ENCODE measurements at regions of chr2 and their contacts with region 1.

Region 1: DNA sequence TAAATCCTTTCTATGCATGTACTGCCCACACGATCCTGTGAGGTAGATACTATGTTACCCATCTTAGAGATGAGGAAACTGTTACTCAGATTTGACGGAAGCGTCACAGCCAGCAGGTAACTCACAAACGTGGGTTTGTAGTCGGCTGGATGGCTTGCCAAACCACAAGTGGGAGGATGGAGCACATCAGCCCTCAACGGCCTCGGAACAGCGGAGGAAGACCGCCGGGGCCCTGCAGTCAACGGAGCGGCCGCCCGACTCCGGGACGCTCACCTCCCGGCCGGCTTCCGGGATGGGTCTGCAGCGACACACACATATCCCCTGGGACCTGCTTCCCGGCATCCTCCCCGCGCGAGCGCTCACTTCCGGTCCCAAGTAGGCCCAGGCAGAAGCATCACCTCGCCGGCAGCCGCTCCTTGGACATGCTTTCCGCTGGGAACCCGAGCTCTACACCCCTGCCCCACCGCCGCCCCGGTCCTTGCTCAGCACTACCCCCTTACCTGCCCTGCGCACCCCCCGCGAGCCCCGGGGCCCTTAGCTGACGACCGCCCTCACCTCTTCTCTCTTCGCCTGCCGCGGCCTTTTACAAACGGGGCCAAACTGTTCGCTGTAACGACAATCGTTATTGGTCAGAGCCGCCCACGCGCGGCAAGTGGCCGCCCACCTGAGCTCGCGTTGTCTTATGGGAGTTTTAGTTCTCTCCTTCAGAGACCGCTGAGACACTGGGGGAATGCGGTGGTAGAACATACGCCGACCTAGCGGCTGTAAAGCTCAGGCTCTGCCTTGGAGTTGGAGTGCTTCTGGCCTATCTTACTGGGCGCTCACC is at the start of gene C2orf42:
- DNase-seq: peak; percentile 98
- H3K4me3 Mint-ChIP-seq: peak within 1 kb of the TSS; percentile 92
- H3K27ac Mint-ChIP-seq: peak within 1 kb of the TSS; percentile 100
- H3K4me1 Mint-ChIP-seq: peaks cover 21% of the 10 kb centered on the region
- H3K27me3 Mint-ChIP-seq: peaks cover 2% of the 10 kb centered on the region
- total RNA-seq, gene C2orf42: 18.5 and 19.6 TPM in 2 replicates

Region 2: DNA sequence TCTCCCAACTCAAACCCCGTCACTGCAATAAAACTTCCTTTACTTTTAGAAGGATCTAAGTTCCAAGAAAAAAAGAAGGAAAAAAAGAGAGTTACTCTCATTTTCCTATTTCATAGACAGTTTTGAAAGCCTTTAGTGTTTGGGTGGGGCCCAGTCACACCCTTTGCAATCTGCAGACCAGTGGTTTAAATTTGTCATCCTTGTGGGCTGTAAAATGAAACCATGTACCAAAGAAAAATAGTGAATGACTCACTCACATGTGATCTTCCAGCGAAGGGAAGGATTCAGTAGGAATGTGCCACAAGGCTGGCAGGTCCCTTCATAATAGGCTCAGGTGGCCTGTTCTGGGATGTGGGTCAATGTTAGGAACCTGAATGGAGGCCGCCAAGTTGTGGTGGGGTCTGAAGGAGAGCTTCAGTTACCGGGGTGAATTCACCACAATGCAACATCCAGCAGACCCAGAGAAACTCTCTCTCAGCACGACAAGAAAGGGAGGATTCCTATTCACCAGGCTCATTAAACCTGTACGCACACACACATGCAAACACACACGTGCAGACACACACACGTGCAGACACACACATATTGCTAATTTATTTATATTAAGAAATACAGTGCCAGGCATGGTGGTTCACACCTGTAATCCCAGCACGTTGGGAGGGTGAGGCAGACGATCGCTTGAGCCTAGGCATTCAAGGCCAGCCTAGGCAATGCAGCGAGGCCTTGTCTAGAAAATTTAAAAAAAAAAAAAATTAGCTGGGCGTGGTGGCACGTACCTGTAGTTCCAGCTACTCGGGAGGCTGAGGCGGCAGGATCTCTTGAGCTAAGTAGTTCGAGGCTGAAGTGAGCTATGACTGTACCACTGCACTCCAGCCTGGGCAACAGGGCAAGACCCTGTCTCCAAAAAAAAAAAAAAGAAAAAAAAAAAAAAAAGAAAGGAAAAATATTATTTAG is 420.2 kb before region 1 on chr2:
- intact Hi-C with region 1: loop called (anchors 1 kb)
- DNase-seq: peak; percentile 80
- H3K4me3 Mint-ChIP-seq: peak overlapping the region; percentile 29
- H3K27ac Mint-ChIP-seq: peak overlapping the region; percentile 77
- H3K4me1 Mint-ChIP-seq: peaks cover 66% of the 10 kb centered on the region
- H3K27me3 Mint-ChIP-seq: no peaks in the 10 kb centered on the region

Region 3: DNA sequence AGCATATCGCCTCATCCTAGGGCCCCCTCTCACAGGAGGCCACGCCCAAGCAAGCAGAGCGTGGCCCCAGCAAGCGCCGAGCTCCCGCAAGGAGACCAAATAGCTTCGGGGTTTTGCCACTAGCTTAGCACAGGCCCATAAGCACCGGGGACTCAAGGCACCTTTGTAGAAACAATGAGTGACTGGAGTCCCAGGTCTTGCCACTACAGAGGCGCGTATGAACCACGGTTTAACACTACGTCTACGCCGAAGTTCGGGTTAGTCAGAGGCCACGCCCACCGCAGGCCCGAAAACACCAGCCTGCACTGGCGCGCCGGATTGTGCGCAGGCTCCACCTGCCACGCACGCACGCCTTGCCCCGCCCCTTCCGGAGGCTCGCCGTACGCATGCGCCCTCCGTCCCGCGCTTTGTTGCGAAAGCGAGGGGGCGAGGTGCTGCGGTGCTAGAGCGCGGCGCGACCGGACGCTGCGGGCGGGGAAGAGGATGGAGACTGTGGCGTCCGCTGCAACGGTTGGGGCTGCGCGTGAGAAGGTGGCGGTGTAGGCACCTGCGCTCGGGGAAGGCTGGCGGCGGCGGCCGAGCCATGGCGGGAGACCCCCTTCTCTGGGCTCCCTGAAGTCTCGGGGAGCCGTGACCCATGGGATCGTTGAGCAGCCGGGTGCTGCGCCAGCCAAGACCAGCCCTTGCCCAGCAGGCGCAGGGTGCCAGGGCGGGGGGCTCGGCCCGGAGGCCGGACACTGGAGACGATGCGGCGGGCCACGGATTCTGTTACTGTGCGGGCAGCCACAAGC is 361.2 kb before region 1 on chr2 and contains the start of gene GMCL1:
- intact Hi-C with region 1: loop called (anchors 1 kb)
- DNase-seq: peak; percentile 100
- H3K4me3 Mint-ChIP-seq: peak within 1 kb of the TSS; percentile 95
- H3K27ac Mint-ChIP-seq: peak within 1 kb of the TSS; percentile 97
- H3K4me1 Mint-ChIP-seq: peaks cover 43% of the 10 kb centered on the region
- H3K27me3 Mint-ChIP-seq: no peaks in the 10 kb centered on the region
- total RNA-seq, gene GMCL1: 25.9 and 28.0 TPM in 2 replicates

Region 4: DNA sequence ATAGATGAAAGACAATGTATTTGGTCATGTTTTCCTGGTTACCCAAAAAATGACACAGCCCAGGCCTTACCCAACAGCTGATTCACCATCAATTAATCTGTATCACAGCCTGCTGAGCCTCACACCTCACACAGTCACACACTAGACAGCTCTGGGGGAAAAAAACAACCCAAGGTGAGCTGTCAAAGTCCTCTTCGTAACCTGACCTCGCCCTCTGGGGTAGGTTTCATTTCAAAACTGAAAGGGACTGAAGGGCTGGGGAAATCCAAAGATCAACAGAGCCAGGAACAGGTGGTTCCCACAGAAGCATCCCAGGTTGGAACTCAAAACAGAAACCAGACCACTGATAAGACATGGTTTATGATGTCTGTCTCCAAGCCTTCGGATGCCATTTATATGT is 121.6 kb before region 1 on chr2:
- intact Hi-C with region 1: loop called (anchors 1 kb)
- DNase-seq: peak; percentile 94
- H3K4me3 Mint-ChIP-seq: peak overlapping the region; percentile 47
- H3K27ac Mint-ChIP-seq: peak overlapping the region; percentile 91
- H3K4me1 Mint-ChIP-seq: peaks cover 43% of the 10 kb centered on the region
- H3K27me3 Mint-ChIP-seq: no peaks in the 10 kb centered on the region

Region 5: DNA sequence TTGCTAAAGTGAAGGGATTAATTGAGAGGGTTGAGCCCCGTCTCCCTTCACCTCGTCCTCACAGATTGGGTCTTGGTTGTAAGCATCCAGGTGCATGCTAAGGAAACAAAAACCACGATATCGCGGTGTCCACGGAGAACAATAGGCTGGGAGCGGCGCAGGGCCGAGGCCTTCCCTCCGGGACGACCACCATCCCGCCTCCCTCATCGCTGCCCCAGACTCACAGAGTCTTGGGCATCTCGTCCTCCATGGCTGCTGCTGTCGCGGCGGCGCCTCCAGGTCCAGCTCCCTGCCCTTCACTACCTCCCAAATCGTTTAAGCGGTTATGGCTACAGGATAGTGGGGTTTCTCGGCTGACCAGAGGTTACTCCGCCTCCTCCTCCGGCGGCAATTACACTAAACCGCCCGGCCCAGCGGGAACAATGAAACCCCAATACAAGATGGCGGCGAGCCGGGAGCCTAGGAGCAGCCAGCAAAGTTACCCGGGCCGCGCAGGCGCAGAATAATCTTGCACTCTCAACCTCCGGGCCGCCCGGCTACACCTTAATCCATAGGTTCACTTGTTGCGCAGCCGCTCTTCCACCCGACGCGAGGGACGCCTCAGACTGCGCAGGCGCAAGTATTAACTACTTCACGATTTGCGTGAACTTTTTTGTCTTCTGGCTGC is 57.7 kb after region 1 on chr2 and contains the start of gene TIA1:
- intact Hi-C with region 1: loop called (anchors 1 kb)
- DNase-seq: peak; percentile 99
- H3K4me3 Mint-ChIP-seq: peak within 1 kb of the TSS; percentile 96
- H3K27ac Mint-ChIP-seq: peak within 1 kb of the TSS; percentile 99
- H3K4me1 Mint-ChIP-seq: peaks cover 26% of the 10 kb centered on the region
- H3K27me3 Mint-ChIP-seq: peaks cover 3% of the 10 kb centered on the region
- total RNA-seq, gene TIA1: 104 and 105 TPM in 2 replicates

Region 6: GRCh38 chr2:70258532-70258874 is 67.9 kb after region 1 on chr2:
- intact Hi-C with region 1: loop called (anchors 2 kb)
- DNase-seq: no peak
- H3K4me3 Mint-ChIP-seq: peak overlapping the region; percentile 91
- H3K27ac Mint-ChIP-seq: no peak overlapping the region
- H3K4me1 Mint-ChIP-seq: peaks cover 27% of the 10 kb centered on the region
- H3K27me3 Mint-ChIP-seq: no peaks in the 10 kb centered on the region